Dorsolateral prefrontal cortex (tissue), 120 donors: ENCODE measurements at regions of chr2 and their contacts with region 1.

Region 1: GRCh38 chr2:219057709-219058540 is 2.8 kb downstream of the IHH start:
- DNase-seq: peak; percentile 59 to 87 (median 74)
- H3K4me3 ChIP-seq: peak overlapping the region in 55 of 59 donors; percentile 6 to 62 (median 45)
- H3K27ac ChIP-seq: no peak overlapping the region
- H3K27me3 ChIP-seq: peaks cover 11 to 78% (median 62%) of the 10 kb centered on the region in 45 donors
- CTCF ChIP-seq: peak; percentile 48 to 98 (median 92)

Region 2: GRCh38 chr2:218046238-218046637 is 1011.7 kb before region 1 on chr2:
- intact Hi-C with region 1: no loop called
- DNase-seq: no peak
- H3K4me3 ChIP-seq: no peak overlapping the region
- H3K27ac ChIP-seq: peak overlapping the region in 1 of 59 donors; percentile 10
- H3K27me3 ChIP-seq: no peaks in the 10 kb centered on the region
- CTCF ChIP-seq: no peak

Region 3: GRCh38 chr2:219079417-219079816 is 21.5 kb after region 1 on chr2:
- intact Hi-C with region 1: no loop called
- DNase-seq: no peak
- H3K4me3 ChIP-seq: no peak overlapping the region
- H3K27ac ChIP-seq: no peak overlapping the region
- H3K27me3 ChIP-seq: no peaks in the 10 kb centered on the region
- CTCF ChIP-seq: no peak

Region 4: GRCh38 chr2:219111375-219112061 is 53.6 kb after region 1 on chr2:
- intact Hi-C with region 1: loop called in 1 of 2 experiments (anchors 5 kb)
- DNase-seq: no peak
- H3K4me3 ChIP-seq: no peak overlapping the region
- H3K27ac ChIP-seq: no peak overlapping the region
- H3K27me3 ChIP-seq: no peaks in the 10 kb centered on the region
- CTCF ChIP-seq: no peak

Region 5: GRCh38 chr2:219119422-219120043 is 61.6 kb after region 1 on chr2:
- intact Hi-C with region 1: loop called (anchors 1 to 5 kb)
- DNase-seq: peak in 9 of 10 donors; percentile 47 to 83 (median 67)
- H3K4me3 ChIP-seq: no peak overlapping the region
- H3K27ac ChIP-seq: no peak overlapping the region
- H3K27me3 ChIP-seq: no peaks in the 10 kb centered on the region
- CTCF ChIP-seq: peak; percentile 32 to 90 (median 77)

Region 6: GRCh38 chr2:219155054-219155644 is 97.2 kb after region 1 on chr2:
- intact Hi-C with region 1: loop called in 1 of 2 experiments (anchors 5 kb)
- DNase-seq: peak in 2 of 10 donors; percentile 36 to 39
- H3K4me3 ChIP-seq: no peak overlapping the region
- H3K27ac ChIP-seq: no peak overlapping the region
- H3K27me3 ChIP-seq: no peaks in the 10 kb centered on the region
- CTCF ChIP-seq: peak; percentile 60 to 93 (median 78)

Region 7: GRCh38 chr2:219171231-219171651 is 113.3 kb after region 1 on chr2:
- intact Hi-C with region 1: loop called in 1 of 2 experiments (anchors 5 kb)
- DNase-seq: peak in 2 of 10 donors; percentile 35 to 38
- H3K4me3 ChIP-seq: no peak overlapping the region
- H3K27ac ChIP-seq: peak overlapping the region in 49 of 59 donors; percentile 13 to 83 (median 57)
- H3K27me3 ChIP-seq: no peaks in the 10 kb centered on the region
- CTCF ChIP-seq: peak; percentile 55 to 88 (median 72)